ENCODE measurements at regions of chr9 and their contacts with region 1.

Region 1: GRCh38 chr9:121498150-121498486 is 1.5 kb downstream of the GGTA1 start:
- DNase-seq: no peak

Region 2: GRCh38 chr9:121439711-121440664 is 58.1 kb before region 1 on chr9:
- intact Hi-C with region 1: loop called (anchors 10 kb)
- DNase-seq: no peak

Region 3: GRCh38 chr9:121463026-121463807 is 34.9 kb before region 1 on chr9:
- intact Hi-C with region 1: loop called (anchors 2 kb)
- DNase-seq: peak; percentile 84

Region 4: DNA sequence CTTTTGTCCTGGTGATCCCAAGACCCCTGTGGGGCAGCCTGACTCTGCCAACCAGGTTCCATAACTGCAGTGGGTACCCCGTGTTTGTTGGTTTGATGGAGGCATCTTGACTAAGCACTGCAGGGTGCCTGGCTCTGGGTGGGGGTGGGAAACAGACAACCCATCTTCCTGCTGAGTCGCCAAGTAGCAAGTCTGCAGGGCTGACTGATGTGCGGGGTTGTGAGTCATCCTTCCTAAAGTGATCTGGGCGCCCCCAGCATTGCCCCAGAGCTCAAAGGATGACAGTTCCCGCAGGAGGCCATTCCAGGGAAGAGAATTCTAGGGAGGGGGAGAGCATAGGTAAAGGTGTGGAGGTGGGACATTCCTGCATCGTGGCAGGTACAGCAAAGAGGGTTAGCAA is 176.8 kb after region 1 on chr9:
- intact Hi-C with region 1: no loop called
- DNase-seq: no peak